Mammary epithelial cell (primary cell): ENCODE measurements at regions of chr2 and their contacts with region 1.

Region 1: DNA sequence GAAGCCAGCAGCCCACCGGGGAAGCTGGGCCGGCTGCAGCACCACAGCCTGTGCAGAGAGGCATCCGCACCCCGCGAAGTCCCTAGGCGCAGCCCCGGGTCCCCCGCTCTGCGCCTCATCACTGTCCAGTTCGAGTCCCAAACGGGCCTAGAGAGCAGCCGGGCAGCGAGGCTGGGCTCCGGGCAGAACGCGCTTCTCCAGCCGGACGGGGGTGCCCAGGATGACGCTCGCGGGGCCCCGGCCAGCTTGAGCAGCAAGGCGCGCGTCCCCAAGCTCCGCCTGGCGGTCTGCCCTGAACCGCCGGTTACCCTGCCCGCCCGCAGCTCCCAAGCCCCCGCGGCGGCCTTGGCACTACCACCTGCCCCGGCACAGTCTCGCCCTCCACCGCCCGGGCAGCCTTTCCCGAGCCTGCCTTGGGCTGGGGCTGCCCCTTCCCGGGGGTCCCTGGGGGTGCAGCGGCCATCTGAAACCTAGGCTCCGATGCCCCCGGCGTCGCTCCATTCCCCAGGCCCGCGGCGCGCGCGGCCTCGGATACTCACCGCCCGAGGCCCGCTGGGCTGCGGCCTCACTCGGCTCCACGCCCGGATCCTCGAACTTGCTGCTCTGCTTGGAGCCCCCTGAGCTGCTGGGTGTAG is 591 bp downstream of the SLC16A14 start:
- DNase-seq: peak; percentile 34
- H3K4me3 ChIP-seq: peak overlapping the region; percentile 38 to 50 (median 50)
- H3K27ac ChIP-seq: no peak overlapping the region
- H3K4me1 ChIP-seq: peaks cover 21% of the 10 kb centered on the region
- H3K27me3 ChIP-seq: no peaks in the 10 kb centered on the region
- CTCF ChIP-seq: peak in 1 of 2 donors; percentile 10

Region 2: GRCh38 chr2:229800997-229801754 is 267.0 kb before region 1 on chr2:
- CTCF ChIA-PET with region 1: no interaction called
- dilution Hi-C with region 1: no loop called
- in situ Hi-C with region 1: no loop called
- intact Hi-C with region 1: loop called (anchors 10 kb)
- DNase-seq: peak; percentile 35
- H3K4me3 ChIP-seq: no peak overlapping the region
- H3K27ac ChIP-seq: peak overlapping the region; percentile 47
- H3K4me1 ChIP-seq: peaks cover 10% of the 10 kb centered on the region
- H3K27me3 ChIP-seq: no peaks in the 10 kb centered on the region
- CTCF ChIP-seq: peak; percentile 78 to 79

Region 3: GRCh38 chr2:229921892-229922445 is 146.2 kb before region 1 on chr2 and contains the start of gene TRIP12:
- CTCF ChIA-PET with region 1: no interaction called
- dilution Hi-C with region 1: no loop called
- in situ Hi-C with region 1: no loop called
- intact Hi-C with region 1: loop called (anchors 5 kb)
- DNase-seq: peak; percentile 97
- H3K4me3 ChIP-seq: peak within 1 kb of the TSS; percentile 74 to 84 (median 80)
- H3K27ac ChIP-seq: peak within 1 kb of the TSS; percentile 79
- H3K4me1 ChIP-seq: peaks cover 14% of the 10 kb centered on the region
- H3K27me3 ChIP-seq: no peaks in the 10 kb centered on the region
- CTCF ChIP-seq: no peak
- total RNA-seq, gene TRIP12: 235 to 245 TPM

Region 4: DNA sequence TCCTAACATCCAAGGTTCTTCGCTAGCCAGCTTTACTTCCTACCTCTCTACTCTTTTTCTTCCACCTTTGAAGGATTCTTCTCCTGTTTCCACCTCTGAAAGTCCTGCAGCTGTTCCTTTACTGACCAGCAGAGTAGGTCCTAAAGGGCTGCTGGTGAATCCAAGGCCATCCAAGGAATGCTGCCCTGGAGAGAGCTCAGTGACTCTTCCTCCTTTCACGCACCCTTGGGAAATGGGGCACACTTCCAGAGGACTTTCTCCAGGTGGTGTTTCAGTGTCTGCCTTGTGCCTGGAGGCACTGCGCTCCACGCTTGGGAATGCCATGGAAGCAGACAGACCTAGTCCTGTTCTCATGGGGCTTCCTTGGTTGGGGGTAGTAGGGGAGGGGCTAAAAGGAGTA is 44.8 kb before region 1 on chr2:
- CTCF ChIA-PET with region 1: no interaction called
- dilution Hi-C with region 1: no loop called
- in situ Hi-C with region 1: no loop called
- intact Hi-C with region 1: no loop called
- DNase-seq: no peak
- H3K4me3 ChIP-seq: no peak overlapping the region
- H3K27ac ChIP-seq: no peak overlapping the region
- H3K4me1 ChIP-seq: no peaks in the 10 kb centered on the region
- H3K27me3 ChIP-seq: no peaks in the 10 kb centered on the region
- CTCF ChIP-seq: no peak

Region 5: GRCh38 chr2:230202430-230203109 is 134.4 kb after region 1 on chr2:
- CTCF ChIA-PET with region 1: no interaction called
- dilution Hi-C with region 1: no loop called
- in situ Hi-C with region 1: no loop called
- intact Hi-C with region 1: no loop called
- DNase-seq: no peak
- H3K4me3 ChIP-seq: no peak overlapping the region
- H3K27ac ChIP-seq: no peak overlapping the region
- H3K4me1 ChIP-seq: no peaks in the 10 kb centered on the region
- H3K27me3 ChIP-seq: no peaks in the 10 kb centered on the region
- CTCF ChIP-seq: no peak